Cardiac septum (tissue), 1 donor: ENCODE measurements at regions of chr1 and their contacts with region 1.

Region 1: DNA sequence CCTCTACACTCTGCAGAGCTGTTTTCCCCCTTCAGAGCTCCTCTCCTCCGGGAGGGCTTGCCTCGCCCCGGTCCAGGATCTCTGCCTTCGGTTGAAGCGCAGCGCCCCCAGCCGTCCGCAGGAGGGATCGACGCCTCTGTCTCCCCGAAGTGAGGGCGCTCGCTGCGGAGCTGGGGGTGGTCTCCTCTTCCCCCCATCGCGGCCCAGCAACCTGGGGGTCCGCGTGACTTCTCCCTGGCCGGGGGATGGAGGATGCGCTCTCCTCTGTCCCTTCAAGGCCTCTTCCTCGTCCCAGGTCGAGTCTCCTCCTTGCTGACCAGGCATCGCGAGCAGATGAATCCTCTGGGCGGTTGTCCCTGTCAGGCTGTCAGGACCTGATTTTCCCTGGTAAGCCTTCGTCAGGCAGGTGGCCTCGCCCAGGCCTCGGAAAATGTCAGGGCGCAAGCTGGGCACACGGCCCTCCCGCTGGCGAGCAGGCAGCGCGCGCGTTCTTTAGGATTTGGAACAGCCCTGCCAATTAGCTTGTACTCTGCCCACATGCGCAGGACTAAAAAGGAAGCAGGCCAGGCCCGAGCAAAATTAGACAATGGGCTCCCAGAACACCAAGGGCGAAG is 90.5 kb downstream of the EDEM3 start:
- DNase-seq: peak; percentile 84

Region 2: DNA sequence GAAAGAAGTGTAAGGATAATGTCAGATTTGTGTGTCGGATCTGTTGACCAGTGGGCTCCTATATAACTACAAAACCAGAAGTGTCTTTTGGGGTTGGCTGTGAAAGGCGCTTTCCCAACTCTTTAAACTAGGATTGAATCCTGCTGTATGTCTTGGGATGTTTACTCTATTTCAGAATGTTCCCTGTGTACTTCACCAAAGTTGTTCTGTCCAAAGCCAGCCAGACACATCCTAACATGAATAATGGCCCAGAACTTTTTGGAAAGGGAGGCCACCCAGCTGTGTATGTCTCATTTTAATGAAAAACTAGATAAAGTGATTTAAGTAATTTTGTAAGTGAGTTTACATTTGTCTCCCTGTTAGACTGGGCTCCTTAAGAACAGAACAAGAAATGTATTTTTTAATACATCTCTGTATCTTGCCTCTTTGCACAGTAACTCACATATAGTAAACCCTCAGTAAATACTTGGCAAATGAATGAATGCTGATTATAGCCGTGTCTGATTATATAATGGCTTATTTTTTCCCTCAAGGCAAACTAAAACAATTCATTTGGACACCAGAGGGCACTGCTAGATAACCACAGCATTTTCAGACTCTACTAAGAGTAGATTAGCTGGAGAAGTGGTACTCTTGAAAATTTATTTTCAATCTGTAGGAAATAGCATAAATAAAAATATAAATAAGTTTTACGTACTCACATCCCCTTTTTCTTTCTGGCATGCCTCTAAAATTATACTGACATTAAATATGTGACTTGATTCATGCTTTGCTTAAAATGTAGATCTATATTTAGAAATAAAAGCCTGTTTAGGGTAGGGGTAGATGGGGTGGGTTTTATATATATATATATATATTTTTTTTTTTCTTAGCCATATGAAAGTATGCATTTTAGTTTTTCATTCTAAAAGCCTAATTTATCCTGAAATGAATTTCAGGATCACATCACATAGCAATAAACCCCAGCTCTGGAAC is 588.8 kb before region 1 on chr1:
- intact Hi-C with region 1: loop called (anchors 1 kb)
- DNase-seq: no peak

Region 3: DNA sequence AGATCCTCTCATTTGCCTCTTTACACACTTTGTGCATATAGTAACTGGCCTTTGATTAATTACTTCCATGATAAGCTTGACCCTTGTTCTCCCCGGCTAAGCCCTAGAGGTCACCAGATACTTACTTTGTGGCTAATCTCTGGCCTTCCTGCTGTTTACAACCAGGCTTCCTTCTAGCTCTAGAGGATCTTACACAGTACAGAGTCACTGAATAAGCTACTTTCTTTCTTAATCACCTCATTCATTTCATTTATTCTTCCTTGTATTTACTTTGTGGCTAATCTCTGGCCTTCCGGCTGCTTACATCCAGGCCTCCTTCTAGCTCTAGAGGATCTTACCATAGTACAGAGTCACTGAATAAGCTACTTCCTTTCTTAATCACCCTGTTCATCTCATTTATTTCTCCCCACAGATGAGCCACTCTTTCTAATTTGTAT is 421.6 kb before region 1 on chr1:
- intact Hi-C with region 1: loop called (anchors 5 kb)
- DNase-seq: no peak

Region 4: GRCh38 chr1:184483101-184483683 is 181.0 kb before region 1 on chr1:
- intact Hi-C with region 1: loop called (anchors 5 kb)
- DNase-seq: no peak

Region 5: GRCh38 chr1:184724843-184725242 is 60.7 kb after region 1 on chr1:
- intact Hi-C with region 1: no loop called
- DNase-seq: no peak

Region 6: GRCh38 chr1:185008838-185009237 is 344.7 kb after region 1 on chr1:
- intact Hi-C with region 1: no loop called
- DNase-seq: no peak